Naive thymus-derived CD8-positive, alpha-beta T cell (primary cell): ENCODE measurements at regions of chr17 and their contacts with region 1.

Region 1: GRCh38 chr17:64145757-64146417 is 15.9 kb upstream of the ERN1 start:
- DNase-seq: peak; percentile 82 to 99 (median 96)
- ATAC-seq: peak; percentile 91 to 92
- H3K4me3 Mint-ChIP-seq: no peak overlapping the region
- H3K27ac Mint-ChIP-seq: no peak overlapping the region
- H3K4me1 Mint-ChIP-seq: peaks cover 15 to 27% (median 24%) of the 10 kb centered on the region in 4 donors
- H3K27me3 Mint-ChIP-seq: no peaks in the 10 kb centered on the region

Region 2: DNA sequence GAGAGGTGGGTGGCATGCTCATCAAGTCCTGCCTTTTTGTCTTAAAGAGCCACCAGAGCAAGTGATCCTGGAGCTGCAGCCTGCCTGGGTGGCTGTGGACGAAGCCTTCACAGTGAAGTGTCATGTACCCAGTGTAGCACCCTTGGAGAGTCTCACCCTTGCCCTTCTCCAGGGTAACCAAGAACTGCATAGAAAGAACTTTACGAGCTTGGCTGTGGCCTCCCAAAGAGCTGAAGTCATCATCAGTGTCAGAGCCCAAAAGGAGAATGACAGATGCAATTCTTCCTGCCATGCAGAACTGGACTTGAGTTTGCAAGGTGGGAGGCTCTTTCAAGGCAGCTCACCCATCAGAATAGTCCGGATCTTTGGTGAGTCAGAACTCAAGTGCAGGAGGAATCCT is 286.6 kb before region 1 on chr17:
- POLR2A ChIA-PET with region 1: no interaction called
- DNase-seq: no peak
- ATAC-seq: no peak
- H3K4me3 Mint-ChIP-seq: no peak overlapping the region
- H3K27ac Mint-ChIP-seq: no peak overlapping the region
- H3K4me1 Mint-ChIP-seq: no peaks in the 10 kb centered on the region
- H3K27me3 Mint-ChIP-seq: peaks cover 0 to 6% (median 0%) of the 10 kb centered on the region in 5 donors

Region 3: GRCh38 chr17:63919311-63919723 is 226.6 kb before region 1 on chr17:
- POLR2A ChIA-PET with region 1: interaction called, 11 read pairs
- DNase-seq: peak; percentile 48 to 83 (median 74)
- ATAC-seq: peak; percentile 92 to 96
- H3K4me3 Mint-ChIP-seq: peak overlapping the region in 1 of 10 donors; percentile 66
- H3K27ac Mint-ChIP-seq: peak overlapping the region in 7 of 10 donors; percentile 12 to 87 (median 43)
- H3K4me1 Mint-ChIP-seq: peaks cover 4 to 48% (median 9%) of the 10 kb centered on the region in 4 donors
- H3K27me3 Mint-ChIP-seq: peaks cover 0 to 5% (median 0%) of the 10 kb centered on the region in 5 donors

Region 4: GRCh38 chr17:64025732-64026294 is 120.1 kb before region 1 on chr17:
- POLR2A ChIA-PET with region 1: interaction called, 62 read pairs
- DNase-seq: peak; percentile 88 to 98 (median 94)
- ATAC-seq: peak; percentile 83 to 92
- H3K4me3 Mint-ChIP-seq: peak overlapping the region; percentile 73 to 93 (median 88)
- H3K27ac Mint-ChIP-seq: peak overlapping the region; percentile 88 to 100 (median 97)
- H3K4me1 Mint-ChIP-seq: peaks cover 19 to 67% (median 58%) of the 10 kb centered on the region in 4 donors
- H3K27me3 Mint-ChIP-seq: no peaks in the 10 kb centered on the region

Region 5: GRCh38 chr17:64129764-64130558 is 15.9 kb before region 1 on chr17 and contains the start of gene ERN1:
- POLR2A ChIA-PET with region 1: interaction called, 98 read pairs
- DNase-seq: peak; percentile 83 to 95 (median 92)
- ATAC-seq: peak; percentile 87 to 89
- H3K4me3 Mint-ChIP-seq: peak within 1 kb of the TSS; percentile 83 to 95 (median 92)
- H3K27ac Mint-ChIP-seq: peak within 1 kb of the TSS; percentile 82 to 97 (median 96)
- H3K4me1 Mint-ChIP-seq: peaks cover 11 to 54% (median 37%) of the 10 kb centered on the region in 4 donors
- H3K27me3 Mint-ChIP-seq: no peaks in the 10 kb centered on the region
- polyA plus RNA-seq, gene ERN1: 9.3 to 21.2 (median 11.5) TPM

Region 6: GRCh38 chr17:64262417-64263260 is 116.8 kb after region 1 on chr17 and contains the start of gene TEX2:
- POLR2A ChIA-PET with region 1: interaction called, 42 read pairs
- DNase-seq: peak; percentile 34 to 83 (median 72)
- ATAC-seq: peak; percentile 43 to 57
- H3K4me3 Mint-ChIP-seq: peak within 1 kb of the TSS; percentile 84 to 99 (median 96)
- H3K27ac Mint-ChIP-seq: peak within 1 kb of the TSS; percentile 86 to 98 (median 96)
- H3K4me1 Mint-ChIP-seq: peaks cover 26 to 46% (median 41%) of the 10 kb centered on the region in 4 donors
- H3K27me3 Mint-ChIP-seq: peaks cover 0 to 5% (median 0%) of the 10 kb centered on the region in 5 donors
- polyA plus RNA-seq, gene TEX2: 5.2 to 7.3 (median 6.3) TPM

Region 7: GRCh38 chr17:64281962-64282727 is 136.3 kb after region 1 on chr17:
- POLR2A ChIA-PET with region 1: interaction called, 11 read pairs
- DNase-seq: peak; percentile 30 to 69 (median 46)
- ATAC-seq: peak; percentile 46 to 64
- H3K4me3 Mint-ChIP-seq: no peak overlapping the region
- H3K27ac Mint-ChIP-seq: no peak overlapping the region
- H3K4me1 Mint-ChIP-seq: peaks cover 0 to 4% (median under 1%) of the 10 kb centered on the region in 4 donors
- H3K27me3 Mint-ChIP-seq: peaks cover 0 to 4% (median 0%) of the 10 kb centered on the region in 5 donors

Region 8: DNA sequence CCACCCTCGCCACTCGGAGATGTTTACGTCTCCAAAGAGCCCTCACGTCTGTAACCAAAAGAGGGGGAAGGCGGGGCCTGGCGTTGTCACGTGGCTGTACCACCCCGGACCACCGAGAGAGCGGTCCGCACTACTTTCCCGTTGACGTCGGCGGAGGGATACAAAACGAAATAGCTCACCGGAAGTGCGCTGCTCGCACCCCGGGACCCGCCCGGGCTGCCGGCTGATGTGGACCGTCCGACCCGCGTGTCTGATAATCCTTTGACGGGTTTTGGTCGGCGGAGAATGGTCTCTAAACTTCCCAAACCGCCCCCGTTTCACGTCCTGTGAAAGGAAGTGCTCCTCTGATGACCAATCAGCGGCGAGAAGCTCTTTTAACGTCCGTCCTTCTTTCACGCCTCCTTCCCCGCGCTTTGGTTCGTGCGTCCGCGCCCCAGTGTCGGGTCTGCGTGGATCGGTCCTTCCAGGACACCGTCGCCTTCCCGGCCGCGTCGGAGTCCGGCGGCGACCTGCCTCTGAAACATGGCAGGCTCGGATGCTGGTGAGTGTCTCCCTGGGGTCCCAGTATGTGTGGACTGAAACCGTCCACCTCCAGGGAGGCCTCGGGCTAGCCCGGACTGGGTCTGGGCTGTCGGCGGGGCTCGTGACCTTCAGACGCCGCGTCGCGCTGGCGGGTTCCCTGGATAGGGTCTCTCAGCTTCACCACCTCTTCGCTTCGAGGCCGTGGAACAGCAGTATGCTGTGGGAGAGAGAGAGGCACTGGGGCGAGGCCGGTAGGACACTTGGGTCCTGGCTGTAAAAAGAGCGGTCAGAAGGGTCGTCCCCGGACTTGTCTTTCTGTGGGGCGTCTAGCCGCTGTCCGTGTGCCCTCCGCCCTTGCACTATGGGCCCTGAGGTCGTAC is 360.9 kb after region 1 on chr17 and contains the start of gene CEP95:
- POLR2A ChIA-PET with region 1: interaction called, 32 read pairs
- DNase-seq: peak; percentile 88 to 99 (median 96)
- ATAC-seq: peak; percentile 60 to 70
- H3K4me3 Mint-ChIP-seq: peak within 1 kb of the TSS; percentile 98 to 100 (median 100)
- H3K27ac Mint-ChIP-seq: peak within 1 kb of the TSS; percentile 99 to 100 (median 100)
- H3K4me1 Mint-ChIP-seq: peaks cover 30 to 81% (median 57%) of the 10 kb centered on the region in 4 donors
- H3K27me3 Mint-ChIP-seq: peaks cover 0 to 6% (median 0%) of the 10 kb centered on the region in 5 donors
- polyA plus RNA-seq, gene CEP95: 8.6 to 20.1 (median 9.0) TPM